ENCODE measurements at regions of chr17 and their contacts with region 1.

Region 1: DNA sequence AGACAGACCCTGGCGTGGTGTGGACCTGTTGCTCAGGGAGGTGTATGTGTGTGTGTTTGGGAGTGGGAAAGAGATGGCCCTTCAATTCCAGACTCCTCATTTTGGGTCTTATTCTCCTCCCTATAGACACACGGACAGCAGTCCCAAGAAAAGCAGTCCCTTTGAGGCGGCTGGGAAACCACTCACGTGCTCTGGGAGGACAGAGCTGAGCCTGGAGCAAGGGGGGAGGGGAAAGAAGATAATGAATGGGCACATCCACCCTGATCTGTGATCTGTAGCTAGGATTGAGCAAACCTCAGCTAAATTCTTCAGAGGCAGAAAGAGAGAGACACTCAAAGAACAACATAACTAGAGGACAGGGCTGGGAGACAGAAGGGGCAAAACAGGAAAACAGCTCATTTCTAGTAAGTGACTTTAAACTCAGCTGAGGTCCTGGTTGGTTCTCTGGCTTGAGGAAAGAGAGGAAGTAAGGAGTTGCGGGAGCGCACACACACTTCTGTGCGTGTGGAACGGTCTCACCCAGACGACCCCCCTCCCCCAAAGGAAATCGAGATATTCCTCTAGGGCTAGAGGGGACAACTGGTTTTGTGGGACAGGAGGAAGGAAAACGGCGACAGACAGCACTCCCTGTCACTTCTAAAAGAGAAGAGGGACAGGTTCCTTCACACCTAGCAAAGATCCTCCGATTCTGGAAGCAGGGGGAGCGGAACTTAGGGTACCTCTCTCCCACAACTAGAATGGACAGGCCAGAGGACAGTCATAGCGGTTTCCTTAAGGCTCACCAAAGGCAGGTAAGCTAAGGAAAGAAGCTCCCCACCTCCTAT is 658 bp downstream of the RAB5C start:
- DNase-seq: peak in 3 of 14 experiments; percentile 4 to 48 (median 44)
- ATAC-seq: no peak
- H3K4me3 ChIP-seq: peak overlapping the region; percentile 84
- H3K4me3 Mint-ChIP-seq: peak overlapping the region; percentile 99
- H3K27ac ChIP-seq: peak overlapping the region; percentile 72 to 79
- H3K27ac Mint-ChIP-seq: peak overlapping the region; percentile 88
- H3K4me1 ChIP-seq: peaks cover 48% of the 10 kb centered on the region
- H3K4me1 Mint-ChIP-seq: peaks cover 32% of the 10 kb centered on the region
- H3K27me3 ChIP-seq: no peaks in the 10 kb centered on the region
- H3K27me3 Mint-ChIP-seq: no peaks in the 10 kb centered on the region
- CTCF ChIP-seq: no peak

Region 2: DNA sequence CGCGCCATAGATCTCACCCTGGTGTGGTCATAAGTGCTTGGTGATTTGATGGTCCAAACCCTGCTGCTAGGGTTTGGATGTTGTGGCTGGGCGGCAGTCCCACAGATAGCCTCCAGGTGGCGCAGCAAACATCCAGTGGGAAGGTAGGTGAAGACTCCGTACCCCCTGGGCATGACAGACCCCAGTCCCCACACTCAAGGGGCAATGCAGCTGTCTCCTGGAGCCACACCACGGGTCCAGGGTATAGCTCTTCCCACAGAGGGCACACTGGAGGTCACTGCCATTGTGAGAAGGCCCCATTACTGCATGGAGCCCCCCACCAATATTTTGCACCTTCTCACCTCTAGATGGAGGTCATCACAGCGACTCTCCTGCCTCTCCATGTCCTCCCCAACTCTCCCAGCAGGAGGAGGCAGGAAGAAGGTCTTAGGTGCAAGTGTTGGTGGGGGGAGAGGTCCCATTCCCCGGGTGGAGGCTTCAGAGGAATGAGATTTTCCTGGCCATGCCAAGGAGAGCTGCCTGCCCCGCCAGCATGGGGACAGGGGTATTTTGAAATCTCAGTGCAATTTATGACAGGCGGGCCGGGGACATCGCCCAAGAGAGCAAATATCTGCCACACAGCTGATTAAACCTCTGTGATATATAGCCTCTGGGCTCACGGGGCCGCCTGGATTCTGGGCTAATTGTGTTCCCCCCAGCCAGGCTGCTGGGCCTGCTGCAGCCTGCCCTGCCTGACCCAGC is 86.6 kb before region 1 on chr17:
- CTCF ChIA-PET with region 1: no interaction called
- POLR2A ChIA-PET with region 1: no interaction called
- intact Hi-C with region 1: loop called in 1 of 2 experiments (anchors 1 kb)
- DNase-seq: peak; percentile 56 to 83 (median 66)
- ATAC-seq: peak; percentile 53
- H3K4me3 ChIP-seq: no peak overlapping the region
- H3K4me3 Mint-ChIP-seq: no peak overlapping the region
- H3K27ac ChIP-seq: no peak overlapping the region
- H3K27ac Mint-ChIP-seq: no peak overlapping the region
- H3K4me1 ChIP-seq: peaks cover 24% of the 10 kb centered on the region
- H3K4me1 Mint-ChIP-seq: peaks cover 31% of the 10 kb centered on the region
- H3K27me3 ChIP-seq: peaks cover 8 to 11% of the 10 kb centered on the region in 2 experiments
- H3K27me3 Mint-ChIP-seq: peaks cover 24% of the 10 kb centered on the region
- CTCF ChIP-seq: peak; percentile 96

Region 3: DNA sequence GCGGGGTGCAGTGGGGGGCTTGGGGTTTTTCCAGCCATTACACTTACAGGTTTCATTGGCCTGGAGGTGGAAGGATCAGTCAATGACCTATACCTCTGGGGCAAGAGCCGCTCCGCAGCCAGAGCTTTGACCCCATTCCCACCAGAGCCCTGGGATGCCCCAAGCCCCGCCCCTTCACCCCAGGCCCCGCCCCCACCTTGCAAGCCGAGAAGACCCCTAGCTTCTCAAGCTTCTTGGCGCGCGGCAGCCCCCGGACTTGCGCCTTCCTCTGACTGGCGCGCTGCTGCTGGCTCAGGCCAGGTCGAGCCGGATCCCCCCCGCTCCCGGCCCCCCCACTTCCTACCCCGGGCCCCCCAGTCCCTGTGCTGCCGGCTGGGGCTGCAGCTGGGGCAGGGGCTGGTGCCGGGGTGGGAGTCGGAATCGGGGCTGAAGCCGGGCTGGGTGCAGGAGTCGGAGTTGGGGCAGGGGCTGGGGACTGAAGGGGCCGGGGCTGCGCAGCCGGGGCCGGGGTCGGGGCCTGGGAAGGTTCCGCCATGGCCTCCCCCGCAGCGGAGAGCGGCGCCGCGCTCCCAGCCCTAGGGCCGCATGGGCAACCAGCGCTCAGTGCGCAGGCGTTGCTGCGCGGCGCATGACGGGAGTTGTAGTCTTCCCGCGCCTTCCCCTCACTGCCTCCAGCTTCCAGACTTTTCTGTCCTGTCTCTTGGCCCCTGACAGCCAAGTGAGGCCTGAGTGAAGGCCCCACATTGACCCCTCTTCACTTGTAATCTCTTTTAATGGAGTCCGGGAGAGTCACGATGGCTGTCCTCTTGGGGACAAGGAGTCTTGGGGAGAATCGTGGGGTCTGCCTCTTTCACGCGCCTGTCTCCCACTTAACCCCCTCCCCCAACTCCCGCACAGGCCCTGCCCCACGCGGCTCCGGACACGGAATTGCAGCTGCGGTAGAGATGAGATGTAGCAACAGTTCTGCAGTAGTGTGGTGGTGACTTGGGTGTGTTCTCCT is 33.1 kb before region 1 on chr17 and contains the start of gene KAT2A:
- CTCF ChIA-PET with region 1: no interaction called
- POLR2A ChIA-PET with region 1: no interaction called
- intact Hi-C with region 1: loop called in 1 of 2 experiments (anchors 2 kb)
- DNase-seq: peak; percentile 59 to 89 (median 72)
- ATAC-seq: peak; percentile 88
- H3K4me3 ChIP-seq: peak within 1 kb of the TSS; percentile 48
- H3K4me3 Mint-ChIP-seq: peak within 1 kb of the TSS; percentile 82
- H3K27ac ChIP-seq: no peak within 1 kb of the TSS
- H3K27ac Mint-ChIP-seq: no peak within 1 kb of the TSS
- H3K4me1 ChIP-seq: peaks cover 28% of the 10 kb centered on the region
- H3K4me1 Mint-ChIP-seq: peaks cover 25% of the 10 kb centered on the region
- H3K27me3 ChIP-seq: no peaks in the 10 kb centered on the region
- H3K27me3 Mint-ChIP-seq: no peaks in the 10 kb centered on the region
- CTCF ChIP-seq: no peak
- total RNA-seq, gene KAT2A: 38.5 to 42.4 TPM

Region 4: GRCh38 chr17:42183741-42184711 is 29.9 kb after region 1 on chr17:
- CTCF ChIA-PET with region 1: interaction called, 4 read pairs
- POLR2A ChIA-PET with region 1: interaction called, 3 read pairs
- intact Hi-C with region 1: loop called (anchors 2 kb)
- DNase-seq: peak; percentile 39 to 90 (median 68)
- ATAC-seq: peak; percentile 63
- H3K4me3 ChIP-seq: peak overlapping the region; percentile 87
- H3K4me3 Mint-ChIP-seq: peak overlapping the region; percentile 86
- H3K27ac ChIP-seq: peak overlapping the region; percentile 73 to 75
- H3K27ac Mint-ChIP-seq: peak overlapping the region; percentile 79
- H3K4me1 ChIP-seq: peaks cover 53% of the 10 kb centered on the region
- H3K4me1 Mint-ChIP-seq: peaks cover 39% of the 10 kb centered on the region
- H3K27me3 ChIP-seq: peaks cover 0 to 14% of the 10 kb centered on the region in 2 experiments
- H3K27me3 Mint-ChIP-seq: peaks cover 30% of the 10 kb centered on the region
- CTCF ChIP-seq: peak; percentile 68

Region 5: DNA sequence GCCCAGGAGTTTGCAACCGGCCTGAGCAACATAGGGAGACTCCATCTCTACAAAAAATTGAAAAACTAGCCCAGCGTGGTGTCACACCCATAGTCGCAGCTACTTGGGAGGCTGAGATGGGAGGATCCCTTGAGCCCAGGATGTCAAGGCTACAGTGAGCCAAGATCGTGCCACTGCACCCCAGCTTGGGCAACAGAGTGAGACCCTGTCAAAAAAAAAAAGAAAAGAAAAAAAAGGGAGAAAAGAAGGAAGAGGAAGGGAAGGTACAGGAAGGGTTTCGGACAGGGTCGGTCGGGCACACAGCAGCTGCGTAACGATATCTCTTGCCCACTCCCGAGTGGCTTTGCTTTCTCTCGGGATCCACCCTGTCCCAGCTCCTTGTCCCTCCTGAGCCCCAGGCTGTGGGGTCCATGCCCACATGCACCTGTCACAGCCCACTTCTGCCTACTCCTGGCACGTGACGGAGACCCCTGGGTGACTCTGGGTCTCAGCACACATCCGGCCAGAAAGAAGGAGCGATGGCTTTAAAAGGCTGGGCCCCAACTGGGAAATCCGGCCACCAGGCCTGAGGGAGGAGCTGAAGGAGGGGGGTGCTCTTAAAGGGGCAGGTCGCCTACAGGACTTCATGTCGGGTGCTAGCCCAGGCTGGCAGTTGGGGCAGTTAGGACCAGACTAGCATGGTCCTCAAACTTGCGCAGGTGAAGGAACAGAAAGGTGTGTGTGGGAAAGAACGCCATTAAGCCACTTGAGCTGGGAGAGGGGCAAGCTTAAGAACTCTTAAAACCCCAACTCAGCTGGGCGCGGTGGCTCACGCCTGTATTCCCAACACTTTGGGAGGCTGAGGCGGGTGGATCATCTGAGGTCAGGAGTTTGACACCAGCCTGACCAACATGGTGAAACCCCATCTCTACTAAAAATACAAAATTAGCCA is 40.1 kb after region 1 on chr17 and contains the start of gene GHDC:
- CTCF ChIA-PET with region 1: no interaction called
- POLR2A ChIA-PET with region 1: interaction called, 4 read pairs
- intact Hi-C with region 1: loop called in 1 of 2 experiments (anchors 2 kb)
- DNase-seq: peak; percentile 55 to 88 (median 73)
- ATAC-seq: peak; percentile 97
- H3K4me3 ChIP-seq: peak within 1 kb of the TSS; percentile 75
- H3K4me3 Mint-ChIP-seq: peak within 1 kb of the TSS; percentile 95
- H3K27ac ChIP-seq: peak within 1 kb of the TSS; percentile 34 to 39
- H3K27ac Mint-ChIP-seq: peak within 1 kb of the TSS; percentile 76
- H3K4me1 ChIP-seq: peaks cover 26% of the 10 kb centered on the region
- H3K4me1 Mint-ChIP-seq: peaks cover 18% of the 10 kb centered on the region
- H3K27me3 ChIP-seq: no peaks in the 10 kb centered on the region
- H3K27me3 Mint-ChIP-seq: no peaks in the 10 kb centered on the region
- CTCF ChIP-seq: no peak
- total RNA-seq, gene GHDC: 6.8 to 8.3 TPM